Heart right ventricle (tissue), 16 donors: ENCODE measurements at regions of chr2 and their contacts with region 1.

Region 1: DNA sequence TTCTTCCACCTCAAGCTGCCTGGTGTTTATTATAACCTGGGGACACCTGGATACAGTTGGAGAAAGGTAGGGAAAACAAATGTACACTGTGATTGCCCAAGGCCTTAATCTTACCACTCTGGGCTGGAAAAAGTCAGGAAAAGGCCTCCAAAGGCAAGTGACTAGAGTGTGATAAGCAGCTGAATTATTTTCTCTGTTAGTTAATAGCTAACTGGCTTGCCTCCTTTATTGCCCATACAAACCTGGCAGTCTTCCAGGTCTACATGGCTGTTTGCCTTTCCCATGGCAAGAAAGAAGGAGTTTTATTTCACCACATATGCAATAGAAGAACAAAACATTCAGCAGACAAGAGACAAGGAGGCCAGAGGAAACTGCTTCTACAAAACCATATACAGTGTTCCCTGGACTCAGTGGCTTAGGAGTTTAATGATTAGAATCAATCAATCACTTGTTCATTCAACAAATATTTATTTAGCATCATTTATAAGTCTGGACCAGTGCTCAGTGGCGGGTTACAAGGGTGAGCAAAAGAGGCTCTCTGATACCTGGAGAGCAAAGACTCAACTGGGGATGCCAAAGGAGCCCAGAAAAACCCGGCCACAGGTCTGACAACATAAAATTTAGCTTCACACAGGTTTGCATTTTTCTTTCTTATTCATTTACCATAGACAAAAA is 27.5 kb upstream of the SUCLG1 start:
- DNase-seq: no peak
- ATAC-seq: no peak
- H3K4me3 ChIP-seq: no peak overlapping the region
- H3K27ac ChIP-seq: peak overlapping the region in 1 of 10 donors; percentile 9
- H3K4me1 ChIP-seq: peaks cover 0 to 23% (median 3%) of the 10 kb centered on the region in 9 donors
- H3K27me3 ChIP-seq: no peaks in the 10 kb centered on the region
- CTCF ChIP-seq: no peak

Region 2: GRCh38 chr2:84435345-84436055 is 51.1 kb before region 1 on chr2:
- intact Hi-C with region 1: no loop called
- DNase-seq: peak in 1 of 2 donors; percentile 12
- ATAC-seq: peak; percentile 34 to 84 (median 76)
- H3K4me3 ChIP-seq: no peak overlapping the region
- H3K27ac ChIP-seq: peak overlapping the region in 2 of 10 donors; percentile 16 to 38
- H3K4me1 ChIP-seq: peaks cover 0 to 32% (median 17%) of the 10 kb centered on the region in 9 donors
- H3K27me3 ChIP-seq: no peaks in the 10 kb centered on the region
- CTCF ChIP-seq: no peak

Region 3: GRCh38 chr2:84603911-84604310 is 117.3 kb after region 1 on chr2:
- intact Hi-C with region 1: no loop called
- DNase-seq: no peak
- ATAC-seq: no peak
- H3K4me3 ChIP-seq: no peak overlapping the region
- H3K27ac ChIP-seq: no peak overlapping the region
- H3K4me1 ChIP-seq: no peaks in the 10 kb centered on the region
- H3K27me3 ChIP-seq: no peaks in the 10 kb centered on the region
- CTCF ChIP-seq: no peak

Region 4: DNA sequence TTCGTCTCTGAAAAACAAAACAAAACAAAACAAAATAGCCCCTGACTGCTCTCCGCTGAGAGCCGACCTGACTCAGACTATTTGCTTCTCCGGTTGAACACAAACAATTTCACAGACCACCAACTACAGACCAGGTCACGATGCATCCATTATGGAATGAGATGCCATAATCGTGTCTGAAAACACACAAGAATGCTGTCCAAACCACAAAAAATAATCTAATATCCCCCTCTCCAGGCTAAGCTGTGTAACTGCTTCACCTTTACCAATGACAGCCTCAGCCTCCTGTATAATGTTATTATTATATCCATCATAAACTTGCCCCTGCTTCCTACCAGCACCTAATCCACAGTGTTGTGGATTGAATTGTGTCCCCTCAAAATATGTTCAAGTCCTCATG is 144.5 kb after region 1 on chr2:
- intact Hi-C with region 1: loop called in 4 of 10 experiments (anchors 5 to 10 kb)
- DNase-seq: no peak
- ATAC-seq: peak in 1 of 8 donors; percentile 47
- H3K4me3 ChIP-seq: no peak overlapping the region
- H3K27ac ChIP-seq: no peak overlapping the region
- H3K4me1 ChIP-seq: no peaks in the 10 kb centered on the region
- H3K27me3 ChIP-seq: no peaks in the 10 kb centered on the region
- CTCF ChIP-seq: peak in 8 of 9 donors; percentile 36 to 58 (median 52)